Naive thymus-derived CD8-positive, alpha-beta T cell (primary cell): ENCODE measurements at regions of chr9 and their contacts with region 1.

Region 1: GRCh38 chr9:35071814-35072460 is 488 bp downstream of the VCP start:
- DNase-seq: peak; percentile 60 to 82 (median 72)
- ATAC-seq: peak; percentile 54 to 56
- H3K4me3 Mint-ChIP-seq: peak overlapping the region; percentile 78 to 94 (median 91)
- H3K27ac Mint-ChIP-seq: peak overlapping the region; percentile 87 to 98 (median 94)
- H3K4me1 Mint-ChIP-seq: peaks cover 31 to 54% (median 53%) of the 10 kb centered on the region in 4 donors
- H3K27me3 Mint-ChIP-seq: no peaks in the 10 kb centered on the region

Region 2: DNA sequence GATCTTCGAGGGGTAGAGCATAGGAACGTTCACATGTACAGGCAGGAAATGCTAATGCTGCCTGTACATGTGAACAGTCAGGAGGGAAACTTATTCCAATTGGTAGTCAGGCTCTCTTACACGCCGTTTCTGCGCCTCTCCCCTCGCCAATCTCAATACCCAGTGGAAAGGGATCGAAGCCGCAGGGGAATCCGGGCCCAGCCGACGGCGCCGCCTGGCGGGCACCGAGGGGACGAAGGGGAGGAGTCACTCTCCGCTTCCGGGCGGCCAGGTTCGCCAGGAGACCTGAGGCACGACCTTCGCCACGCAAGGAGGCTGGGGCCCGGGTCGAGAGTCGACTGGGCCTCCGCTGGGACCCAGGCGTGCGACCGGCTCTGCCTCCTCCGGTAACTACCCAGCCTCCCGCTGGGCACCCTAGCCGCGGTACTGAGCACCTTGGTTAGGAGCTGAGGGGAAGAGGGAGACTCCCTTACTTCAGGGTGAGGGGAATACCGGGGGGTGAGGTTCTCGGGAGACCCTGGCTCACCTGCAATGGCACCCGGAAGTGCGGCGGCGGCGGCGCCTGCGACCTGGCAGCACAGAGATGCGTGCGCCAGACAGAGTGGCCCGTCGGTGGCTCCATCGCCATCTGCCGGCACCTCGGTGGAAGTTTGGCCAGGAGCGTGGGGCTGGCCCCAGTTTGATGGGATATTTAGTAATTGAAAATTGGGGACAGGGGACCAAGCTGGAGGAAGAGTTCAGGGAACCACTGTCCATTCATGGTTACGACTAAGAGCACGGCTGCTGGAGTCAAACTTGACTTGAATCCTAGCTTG is 24.3 kb after region 1 on chr9 and contains the start of gene PIGO:
- POLR2A ChIA-PET with region 1: interaction called, 52 read pairs
- DNase-seq: peak; percentile 83 to 94 (median 88)
- ATAC-seq: peak; percentile 90 to 92
- H3K4me3 Mint-ChIP-seq: peak within 1 kb of the TSS; percentile 83 to 93 (median 87)
- H3K27ac Mint-ChIP-seq: peak within 1 kb of the TSS; percentile 86 to 98 (median 95)
- H3K4me1 Mint-ChIP-seq: peaks cover 18 to 51% (median 37%) of the 10 kb centered on the region in 4 donors
- H3K27me3 Mint-ChIP-seq: no peaks in the 10 kb centered on the region
- polyA plus RNA-seq, gene PIGO: 23.0 to 26.2 (median 23.3) TPM

Region 3: GRCh38 chr9:35102926-35103659 is 31.2 kb after region 1 on chr9 and contains the start of gene STOML2:
- POLR2A ChIA-PET with region 1: interaction called, 52 read pairs
- DNase-seq: peak; percentile 75 to 97 (median 90)
- ATAC-seq: peak; percentile 94 to 97
- H3K4me3 Mint-ChIP-seq: peak within 1 kb of the TSS; percentile 88 to 97 (median 93)
- H3K27ac Mint-ChIP-seq: peak within 1 kb of the TSS; percentile 95 to 100 (median 99)
- H3K4me1 Mint-ChIP-seq: peaks cover 20 to 44% (median 33%) of the 10 kb centered on the region in 4 donors
- H3K27me3 Mint-ChIP-seq: no peaks in the 10 kb centered on the region
- polyA plus RNA-seq, gene STOML2: 86.7 to 93.9 (median 88.9) TPM

Region 4: DNA sequence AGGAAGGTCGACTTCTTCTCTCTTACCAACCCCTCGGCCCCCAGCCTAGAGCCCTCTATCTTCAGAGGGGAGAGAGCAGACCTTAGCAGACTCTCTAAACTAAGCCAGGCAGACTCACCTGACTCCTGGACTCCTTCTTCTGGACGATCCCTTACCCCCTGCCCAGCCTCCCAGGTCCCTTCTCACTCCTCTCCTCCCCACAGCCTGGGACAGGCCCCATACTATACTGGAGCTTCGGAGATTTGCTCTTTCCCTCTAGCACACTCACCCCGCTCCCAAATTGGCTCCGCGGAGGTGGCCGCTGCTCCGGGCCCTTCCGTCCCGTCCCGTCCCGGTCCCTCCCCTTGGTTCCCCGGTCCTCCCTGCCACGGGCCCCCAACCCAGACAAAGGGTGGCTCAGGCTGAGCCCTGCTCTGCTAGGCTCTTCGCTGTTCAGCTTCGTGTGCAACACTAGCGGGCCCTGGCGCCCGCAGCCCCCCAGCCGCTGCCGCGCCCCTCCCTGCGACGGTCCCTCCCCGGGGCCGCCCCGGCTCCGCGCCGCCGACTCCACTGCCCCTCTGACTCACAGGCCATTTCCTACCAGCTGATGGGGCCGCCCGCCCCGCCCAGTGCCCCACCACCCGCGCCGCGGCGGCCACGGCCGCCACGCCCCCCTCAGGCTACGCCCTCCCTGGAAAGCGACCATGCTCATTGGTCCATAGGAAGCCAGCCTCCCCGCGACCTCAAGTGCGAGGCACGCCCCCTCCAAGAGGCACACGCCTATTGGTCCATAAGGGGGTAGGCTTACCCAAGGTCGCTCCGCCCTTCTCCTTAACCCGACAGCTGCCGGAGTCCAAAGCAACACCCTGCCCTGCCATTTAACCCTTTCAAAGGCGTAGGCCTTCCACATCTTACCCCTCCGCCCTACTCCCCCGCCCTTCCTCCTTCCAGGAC is 39.3 kb after region 1 on chr9:
- POLR2A ChIA-PET with region 1: interaction called, 19 read pairs
- DNase-seq: peak; percentile 83 to 98 (median 93)
- ATAC-seq: peak; percentile 71 to 82
- H3K4me3 Mint-ChIP-seq: peak overlapping the region; percentile 73 to 92 (median 84)
- H3K27ac Mint-ChIP-seq: peak overlapping the region; percentile 26 to 93 (median 90)
- H3K4me1 Mint-ChIP-seq: peaks cover 40 to 63% (median 57%) of the 10 kb centered on the region in 4 donors
- H3K27me3 Mint-ChIP-seq: no peaks in the 10 kb centered on the region

Region 5: DNA sequence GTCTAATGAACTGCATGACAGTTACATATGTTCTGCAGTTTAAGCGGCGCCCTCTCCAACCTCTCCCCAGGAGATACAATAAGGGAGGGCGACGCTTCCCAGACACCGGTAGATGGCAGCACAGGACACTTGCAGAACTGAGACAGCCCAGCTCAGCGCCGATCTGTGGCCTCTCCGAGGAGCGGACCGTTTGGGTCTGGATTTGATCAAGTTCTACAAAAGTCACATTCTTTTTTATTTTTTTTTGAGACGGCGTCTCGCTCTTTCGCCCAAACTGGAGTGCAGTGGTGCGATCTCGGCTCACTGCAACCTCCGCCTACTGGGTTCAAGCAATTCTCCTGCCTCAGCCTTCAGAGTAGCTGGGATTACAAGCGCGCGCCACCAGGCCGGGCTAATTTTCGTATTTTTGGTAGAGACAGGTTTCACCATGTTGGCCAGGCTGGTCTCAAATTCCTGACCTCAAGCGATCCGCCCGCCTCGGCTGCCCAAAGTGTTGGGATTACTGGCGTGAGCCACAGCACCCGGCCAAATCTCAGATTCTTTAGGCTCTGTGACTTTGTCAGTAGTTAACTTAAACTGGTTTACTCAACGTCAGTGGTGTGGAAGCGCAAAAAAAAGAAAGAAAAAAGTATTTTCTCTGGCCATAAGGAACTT is 45.1 kb after region 1 on chr9:
- POLR2A ChIA-PET with region 1: interaction called, 19 read pairs
- DNase-seq: peak; percentile 75 to 94 (median 87)
- ATAC-seq: peak; percentile 66 to 76
- H3K4me3 Mint-ChIP-seq: peak overlapping the region; percentile 87 to 98 (median 94)
- H3K27ac Mint-ChIP-seq: peak overlapping the region; percentile 84 to 99 (median 95)
- H3K4me1 Mint-ChIP-seq: peaks cover 30 to 42% (median 40%) of the 10 kb centered on the region in 4 donors
- H3K27me3 Mint-ChIP-seq: peaks cover 0 to 2% (median 0%) of the 10 kb centered on the region in 5 donors